ENCODE measurements at regions of chr4 and their contacts with region 1.

Region 1: DNA sequence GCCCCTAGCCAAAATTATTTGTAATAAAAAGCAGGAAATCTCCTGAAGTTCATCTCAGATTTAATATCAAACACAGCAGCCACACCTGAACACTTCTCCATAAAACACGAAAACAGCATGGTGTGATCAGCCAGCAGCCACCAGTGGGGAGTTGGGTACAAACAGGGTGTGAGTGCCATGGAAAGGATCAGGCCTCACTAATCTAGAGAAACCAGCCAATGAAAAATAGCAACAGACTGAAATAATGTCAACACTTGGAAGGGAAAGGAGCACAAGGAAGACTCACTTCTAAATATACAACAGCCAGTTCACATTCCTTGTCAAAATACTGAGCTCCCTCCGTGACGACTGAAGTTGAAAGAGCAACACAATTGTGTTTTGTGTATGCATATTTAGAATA is 46.0 kb downstream of the SLC7A11 start:
- DNase-seq: no peak
- H3K4me3 ChIP-seq: no peak overlapping the region
- H3K27ac ChIP-seq: no peak overlapping the region
- H3K4me1 ChIP-seq: no peaks in the 10 kb centered on the region
- H3K27me3 ChIP-seq: no peaks in the 10 kb centered on the region
- CTCF ChIP-seq: no peak

Region 2: DNA sequence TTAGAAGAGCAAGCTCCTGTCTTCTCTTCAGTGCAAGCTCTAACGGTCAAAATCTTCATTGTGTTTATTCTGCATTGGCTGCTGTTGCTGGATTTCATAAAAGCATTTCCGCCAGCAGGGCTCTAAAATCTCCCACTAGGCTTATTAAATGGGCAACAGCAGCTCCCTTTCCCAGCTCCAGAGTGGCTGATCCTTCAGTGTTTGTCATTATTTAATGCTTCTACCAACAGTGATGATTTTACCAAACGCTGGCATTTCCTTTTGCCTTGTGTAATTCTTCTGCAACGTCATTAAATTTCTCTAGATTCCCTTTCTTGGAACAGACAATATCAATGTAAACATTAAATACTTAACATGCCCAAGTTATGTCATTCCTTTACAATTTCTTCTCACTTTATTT is 25.9 kb after region 1 on chr4:
- intact Hi-C with region 1: loop called (anchors 2 kb)
- DNase-seq: no peak
- H3K4me3 ChIP-seq: no peak overlapping the region
- H3K27ac ChIP-seq: no peak overlapping the region
- H3K4me1 ChIP-seq: peaks cover 0 to 7% (median 3%) of the 10 kb centered on the region in 4 donors
- H3K27me3 ChIP-seq: no peaks in the 10 kb centered on the region
- CTCF ChIP-seq: no peak

Measured in tibial artery (tissue), 4 donors.